ENCODE measurements at regions of chr6 and their contacts with region 1.

Region 1: GRCh38 chr6:15569035-15569995 is 93.5 kb downstream of the DTNBP1 start:
- DNase-seq: no peak
- ATAC-seq: no peak
- H3K4me3 Mint-ChIP-seq: no peak overlapping the region
- H3K27ac Mint-ChIP-seq: no peak overlapping the region
- H3K4me1 Mint-ChIP-seq: peaks cover 20% of the 10 kb centered on the region
- H3K27me3 Mint-ChIP-seq: no peaks in the 10 kb centered on the region
- CTCF ChIP-seq: no peak

Region 2: DNA sequence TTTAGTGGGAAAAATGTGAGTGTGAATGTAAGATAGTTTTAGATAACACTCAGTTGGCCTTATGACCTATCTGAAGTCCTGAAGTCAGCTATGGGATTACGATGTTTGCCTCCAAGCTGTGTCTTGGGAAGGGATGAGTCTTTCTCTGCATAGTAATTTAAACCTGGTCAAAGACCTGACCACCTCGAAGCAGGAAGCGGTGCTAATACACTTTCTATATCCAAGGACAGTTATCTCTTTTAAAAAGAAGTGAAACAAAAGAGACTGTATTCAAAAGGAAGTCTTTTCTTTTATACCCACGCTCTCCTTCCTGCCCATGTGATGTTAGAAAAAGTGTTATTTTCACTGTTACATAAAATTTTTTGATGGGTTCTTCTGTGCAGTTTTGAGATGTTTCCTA is 228.5 kb before region 1 on chr6:
- CTCF ChIA-PET with region 1: no interaction called
- POLR2A ChIA-PET with region 1: no interaction called
- intact Hi-C with region 1: no loop called
- DNase-seq: no peak
- ATAC-seq: no peak
- H3K4me3 Mint-ChIP-seq: peak overlapping the region; percentile 6
- H3K27ac Mint-ChIP-seq: peak overlapping the region; percentile 43
- H3K4me1 Mint-ChIP-seq: peaks cover 87% of the 10 kb centered on the region
- H3K27me3 Mint-ChIP-seq: no peaks in the 10 kb centered on the region
- CTCF ChIP-seq: no peak

Region 3: DNA sequence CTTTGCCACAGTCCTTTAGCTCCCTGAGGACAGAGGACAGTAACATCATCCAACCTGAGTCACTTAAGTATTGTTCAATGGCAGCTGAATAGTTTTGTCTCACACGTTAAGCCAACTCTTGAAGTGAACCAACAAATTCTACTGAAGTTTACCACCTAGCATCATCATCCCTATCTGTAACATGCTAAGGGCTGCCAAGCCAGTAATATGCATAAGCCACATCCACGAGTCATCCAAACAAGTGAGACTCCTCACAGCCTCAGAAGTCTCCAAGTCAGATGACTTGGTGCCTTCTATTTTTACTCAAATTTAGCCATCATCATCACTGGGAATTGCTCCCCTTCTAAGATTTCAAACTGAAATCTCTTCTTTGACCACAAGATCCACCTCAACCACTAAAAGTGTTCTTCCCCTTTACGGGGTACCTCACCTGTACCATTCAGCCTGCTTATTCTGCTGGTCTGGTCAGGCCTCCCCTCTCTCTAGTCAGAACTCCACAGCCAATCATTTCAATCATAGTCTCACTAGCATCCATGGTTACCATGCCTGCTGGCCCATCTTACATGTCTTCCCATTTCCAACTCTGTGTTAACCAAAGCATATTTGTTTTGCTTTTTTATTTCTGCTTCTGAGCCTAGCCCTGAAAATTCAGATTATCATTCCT is 19.8 kb after region 1 on chr6:
- CTCF ChIA-PET with region 1: no interaction called
- POLR2A ChIA-PET with region 1: no interaction called
- intact Hi-C with region 1: loop called (anchors 2 kb)
- DNase-seq: no peak
- ATAC-seq: no peak
- H3K4me3 Mint-ChIP-seq: no peak overlapping the region
- H3K27ac Mint-ChIP-seq: no peak overlapping the region
- H3K4me1 Mint-ChIP-seq: peaks cover 36% of the 10 kb centered on the region
- H3K27me3 Mint-ChIP-seq: no peaks in the 10 kb centered on the region
- CTCF ChIP-seq: no peak

Region 4: GRCh38 chr6:15854826-15855710 is 285.8 kb after region 1 on chr6:
- CTCF ChIA-PET with region 1: no interaction called
- POLR2A ChIA-PET with region 1: interaction called, 12 read pairs
- intact Hi-C with region 1: no loop called
- DNase-seq: no peak
- ATAC-seq: no peak
- H3K4me3 Mint-ChIP-seq: no peak overlapping the region
- H3K27ac Mint-ChIP-seq: no peak overlapping the region
- H3K4me1 Mint-ChIP-seq: no peaks in the 10 kb centered on the region
- H3K27me3 Mint-ChIP-seq: peaks cover 1% of the 10 kb centered on the region
- CTCF ChIP-seq: no peak